CD4-positive, alpha-beta memory T cell (primary cell): ENCODE measurements at regions of chr11 and their contacts with region 1.

Region 1: DNA sequence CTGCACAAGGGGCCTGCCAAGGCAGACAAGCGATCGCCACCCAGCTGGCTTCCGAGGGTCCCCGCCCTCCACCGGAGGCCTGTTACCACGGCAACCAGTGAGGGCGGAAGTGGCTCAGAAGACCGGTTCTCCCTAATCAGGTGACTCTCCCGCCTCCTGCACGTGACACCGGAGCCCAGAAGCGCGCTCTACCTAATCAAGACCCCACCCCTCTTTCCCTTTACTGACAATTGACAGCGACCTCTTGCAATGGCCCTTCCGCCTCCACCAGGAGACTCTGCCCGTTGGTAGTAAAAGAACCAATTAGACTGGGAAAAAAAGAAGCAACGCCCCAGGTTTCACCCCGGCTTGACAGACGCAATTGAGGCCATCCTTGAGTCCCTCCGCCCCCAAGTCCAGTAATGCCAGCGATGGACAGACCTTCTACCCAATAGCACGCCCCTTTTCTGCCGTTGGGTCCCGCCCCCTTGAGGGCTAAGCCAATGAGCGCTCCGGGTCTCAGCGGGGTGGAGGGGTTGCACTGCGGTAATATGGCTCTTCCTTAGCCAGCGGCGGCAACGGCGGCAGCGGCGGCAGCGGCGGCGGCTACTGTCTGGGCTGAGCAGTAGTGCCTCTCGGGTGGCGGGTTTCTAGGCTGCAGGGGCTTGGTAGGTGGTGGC is at the start of gene UVRAG:
- DNase-seq: peak; percentile 99 to 100 (median 99)
- H3K4me3 ChIP-seq: peak within 1 kb of the TSS; percentile 65 to 68
- H3K4me3 Mint-ChIP-seq: peak within 1 kb of the TSS in 4 of 8 donors; percentile 92 to 98 (median 98)
- H3K27ac ChIP-seq: peak within 1 kb of the TSS; percentile 85
- H3K27ac Mint-ChIP-seq: peak within 1 kb of the TSS in 6 of 7 donors; percentile 97 to 99 (median 98)
- H3K4me1 ChIP-seq: peaks cover 33% of the 10 kb centered on the region
- H3K4me1 Mint-ChIP-seq: peaks cover 10 to 34% (median 16%) of the 10 kb centered on the region in 4 donors
- H3K27me3 ChIP-seq: no peaks in the 10 kb centered on the region
- H3K27me3 Mint-ChIP-seq: no peaks in the 10 kb centered on the region
- total RNA-seq, gene UVRAG: 22.0 to 32.2 TPM

Region 2: GRCh38 chr11:75582895-75583717 is 231.7 kb before region 1 on chr11:
- CTCF ChIA-PET with region 1: no interaction called
- POLR2A ChIA-PET with region 1: no interaction called
- intact Hi-C with region 1: loop called (anchors 10 kb)
- DNase-seq: peak; percentile 15 to 68 (median 44)
- H3K4me3 ChIP-seq: peak overlapping the region; percentile 58 to 67
- H3K4me3 Mint-ChIP-seq: peak overlapping the region; percentile 76 to 89 (median 86)
- H3K27ac ChIP-seq: peak overlapping the region; percentile 54
- H3K27ac Mint-ChIP-seq: peak overlapping the region in 6 of 7 donors; percentile 42 to 89 (median 80)
- H3K4me1 ChIP-seq: peaks cover 11% of the 10 kb centered on the region
- H3K4me1 Mint-ChIP-seq: peaks cover 8 to 19% (median 15%) of the 10 kb centered on the region in 4 donors
- H3K27me3 ChIP-seq: no peaks in the 10 kb centered on the region
- H3K27me3 Mint-ChIP-seq: peaks cover 0 to 2% of the 10 kb centered on the region in 2 donors

Region 3: DNA sequence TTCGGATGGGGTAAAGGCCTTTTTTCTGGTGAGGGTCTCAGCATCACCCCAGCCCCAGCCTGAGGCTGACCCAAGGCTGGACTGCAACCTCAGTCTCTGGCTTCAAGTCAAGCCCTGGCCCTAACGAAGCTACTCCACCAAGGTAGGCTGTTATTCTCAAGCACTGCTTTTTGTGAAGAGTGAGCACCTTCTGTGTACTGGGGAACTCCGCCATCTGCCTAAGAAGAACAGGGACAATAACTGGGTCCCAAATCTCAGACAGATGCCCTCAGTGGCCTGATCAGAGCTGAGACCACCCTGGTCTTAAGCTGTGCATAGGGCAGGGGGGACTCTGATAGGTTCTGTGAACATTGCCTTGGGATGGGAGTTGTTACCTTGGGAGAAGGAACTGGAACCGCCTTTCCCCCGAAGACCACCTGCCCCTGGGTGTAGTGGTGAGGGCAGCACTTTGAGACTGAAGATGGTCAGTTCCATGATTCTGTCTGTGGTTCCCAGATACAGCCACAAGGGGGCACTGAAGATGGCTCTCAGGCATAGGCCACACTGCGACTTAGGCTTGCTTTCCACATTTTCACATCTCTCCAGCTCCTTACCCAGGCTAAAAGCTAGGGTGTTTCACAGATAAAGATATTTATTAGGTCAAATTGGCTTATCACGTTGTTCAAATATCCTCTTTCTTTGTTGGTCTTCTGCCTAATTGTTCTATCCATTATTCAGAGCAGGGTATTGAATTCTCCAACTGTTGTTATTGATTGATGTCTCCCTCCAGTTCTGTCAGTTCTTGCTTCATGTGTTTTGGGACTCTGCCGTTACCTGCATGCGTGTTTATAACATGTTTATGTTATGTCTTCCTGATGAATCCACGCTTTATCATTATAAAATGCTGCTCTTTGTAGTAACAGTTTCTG is 11.6 kb before region 1 on chr11:
- CTCF ChIA-PET with region 1: interaction called, 50 read pairs
- POLR2A ChIA-PET with region 1: interaction called, 3 read pairs
- intact Hi-C with region 1: loop called (anchors 1 kb)
- DNase-seq: peak; percentile 59 to 68 (median 61)
- H3K4me3 ChIP-seq: no peak overlapping the region
- H3K4me3 Mint-ChIP-seq: no peak overlapping the region
- H3K27ac ChIP-seq: no peak overlapping the region
- H3K27ac Mint-ChIP-seq: peak overlapping the region in 2 of 7 donors; percentile 23 to 44
- H3K4me1 ChIP-seq: peaks cover 20% of the 10 kb centered on the region
- H3K4me1 Mint-ChIP-seq: peaks cover 9 to 35% (median 20%) of the 10 kb centered on the region in 4 donors
- H3K27me3 ChIP-seq: no peaks in the 10 kb centered on the region
- H3K27me3 Mint-ChIP-seq: no peaks in the 10 kb centered on the region

Region 4: GRCh38 chr11:76235233-76236091 is 420.6 kb after region 1 on chr11:
- CTCF ChIA-PET with region 1: no interaction called
- POLR2A ChIA-PET with region 1: no interaction called
- intact Hi-C with region 1: loop called (anchors 2 kb)
- DNase-seq: peak; percentile 89 to 93 (median 91)
- H3K4me3 ChIP-seq: peak overlapping the region; percentile 87 to 92
- H3K4me3 Mint-ChIP-seq: peak overlapping the region; percentile 92 to 98 (median 96)
- H3K27ac ChIP-seq: peak overlapping the region; percentile 50
- H3K27ac Mint-ChIP-seq: peak overlapping the region; percentile 89 to 100 (median 96)
- H3K4me1 ChIP-seq: peaks cover 42% of the 10 kb centered on the region
- H3K4me1 Mint-ChIP-seq: peaks cover 27 to 59% (median 44%) of the 10 kb centered on the region in 4 donors
- H3K27me3 ChIP-seq: no peaks in the 10 kb centered on the region
- H3K27me3 Mint-ChIP-seq: peaks cover 0 to 9% of the 10 kb centered on the region in 2 donors

Region 5: GRCh38 chr11:76444384-76445123 is 629.7 kb after region 1 on chr11 and contains the start of gene EMSY:
- CTCF ChIA-PET with region 1: no interaction called
- POLR2A ChIA-PET with region 1: no interaction called
- intact Hi-C with region 1: loop called (anchors 10 kb)
- DNase-seq: peak; percentile 92 to 96 (median 94)
- H3K4me3 ChIP-seq: peak within 1 kb of the TSS; percentile 78 to 84
- H3K4me3 Mint-ChIP-seq: peak within 1 kb of the TSS; percentile 90 to 97 (median 97)
- H3K27ac ChIP-seq: peak within 1 kb of the TSS; percentile 92
- H3K27ac Mint-ChIP-seq: peak within 1 kb of the TSS; percentile 94 to 98 (median 98)
- H3K4me1 ChIP-seq: peaks cover 30% of the 10 kb centered on the region
- H3K4me1 Mint-ChIP-seq: peaks cover 25 to 40% (median 34%) of the 10 kb centered on the region in 4 donors
- H3K27me3 ChIP-seq: no peaks in the 10 kb centered on the region
- H3K27me3 Mint-ChIP-seq: no peaks in the 10 kb centered on the region
- total RNA-seq, gene EMSY: 46.3 to 52.9 TPM